ENCODE measurements at regions of chr17 and their contacts with region 1.

Region 1: GRCh38 chr17:45135192-45135977 is at the start of gene ACBD4:
- DNase-seq: peak; percentile 97
- ATAC-seq: peak; percentile 84
- H3K4me3 Mint-ChIP-seq: peak within 1 kb of the TSS; percentile 90
- H3K27ac Mint-ChIP-seq: peak within 1 kb of the TSS; percentile 84
- H3K4me1 Mint-ChIP-seq: peaks cover 16% of the 10 kb centered on the region
- H3K27me3 Mint-ChIP-seq: peaks cover 4% of the 10 kb centered on the region
- CTCF ChIP-seq: peak; percentile 99
- total RNA-seq, gene ACBD4: 20.1 and 20.6 TPM in 2 replicates

Region 2: DNA sequence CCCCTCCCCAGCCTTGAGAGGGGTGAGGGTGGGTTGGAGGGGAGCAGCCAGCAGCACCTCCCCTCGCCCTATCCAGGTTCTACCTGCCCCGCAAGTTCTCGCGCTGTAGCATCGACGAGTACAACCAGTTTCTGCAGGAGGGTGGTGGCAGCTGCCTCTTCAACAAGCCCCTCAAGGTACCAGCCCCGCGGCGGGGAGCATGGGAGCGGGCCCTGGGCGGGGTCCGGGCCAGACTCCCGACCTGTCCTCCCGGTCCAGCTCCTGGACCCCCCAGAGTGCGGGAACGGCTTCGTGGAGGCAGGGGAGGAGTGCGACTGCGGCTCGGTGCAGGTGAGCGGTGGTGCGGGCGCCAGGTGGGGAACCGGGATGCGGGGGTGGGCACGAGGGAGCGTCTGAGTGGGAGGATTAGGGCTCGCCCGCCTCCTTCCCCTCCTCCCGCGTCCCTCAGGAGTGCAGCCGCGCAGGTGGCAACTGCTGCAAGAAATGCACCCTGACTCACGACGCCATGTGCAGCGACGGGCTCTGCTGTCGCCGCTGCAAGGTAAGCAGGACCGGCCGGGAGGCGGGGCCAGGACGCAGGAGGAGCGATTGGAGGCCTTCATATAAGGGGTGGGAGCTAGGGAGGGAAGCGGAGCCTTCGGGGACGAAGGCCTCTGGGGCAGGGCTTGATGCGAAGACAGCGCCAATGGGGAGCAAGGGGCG is 360.1 kb before region 1 on chr17:
- CTCF ChIA-PET with region 1: interaction called, 3 read pairs
- POLR2A ChIA-PET with region 1: no interaction called
- intact Hi-C with region 1: loop called (anchors 1 kb)
- DNase-seq: peak; percentile 90
- ATAC-seq: peak; percentile 96
- H3K4me3 Mint-ChIP-seq: peak overlapping the region; percentile 87
- H3K27ac Mint-ChIP-seq: no peak overlapping the region
- H3K4me1 Mint-ChIP-seq: peaks cover 18% of the 10 kb centered on the region
- H3K27me3 Mint-ChIP-seq: no peaks in the 10 kb centered on the region
- CTCF ChIP-seq: no peak

Region 3: DNA sequence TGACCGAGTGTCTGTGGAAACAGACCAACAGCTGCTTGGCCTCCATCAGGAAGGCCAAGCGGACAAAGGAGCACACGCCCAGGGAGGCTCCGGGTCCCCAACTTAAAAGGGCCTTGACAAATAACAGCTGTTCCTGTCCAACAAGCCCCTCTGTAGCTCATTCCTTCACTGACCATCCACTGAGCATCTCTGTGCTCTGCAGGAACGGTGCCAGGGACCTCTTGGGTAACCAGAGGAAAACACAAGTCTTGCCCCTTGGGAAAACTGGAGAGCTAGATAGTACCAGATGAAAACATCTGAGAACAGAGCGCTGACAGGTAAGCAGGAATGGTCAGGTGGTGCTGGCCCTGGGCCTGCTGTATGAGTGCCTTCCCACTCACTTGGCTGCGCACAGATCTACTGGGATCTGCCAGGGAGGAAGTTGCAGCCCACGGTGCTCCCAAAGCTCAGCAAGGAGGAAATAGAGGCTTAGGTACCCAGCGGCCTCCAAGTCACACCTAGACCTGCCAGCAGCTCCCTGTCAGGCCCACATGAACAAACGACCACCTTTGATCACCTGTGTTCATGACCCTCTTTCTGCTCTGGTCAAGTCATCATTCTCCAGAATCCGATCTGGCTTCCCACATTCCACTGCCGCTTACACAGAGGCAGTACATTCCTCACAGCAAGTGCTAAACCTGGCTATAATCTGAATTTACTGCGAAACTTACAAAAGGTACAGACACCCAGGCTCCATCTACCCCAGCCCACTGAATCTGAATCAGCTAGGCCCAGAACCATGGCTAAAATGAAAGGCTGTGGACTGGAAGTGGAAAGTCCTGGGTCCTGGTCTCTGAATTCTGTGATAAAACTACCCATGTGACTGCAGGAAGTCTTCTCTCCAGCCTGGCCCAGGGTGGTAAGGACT is 96.4 kb before region 1 on chr17:
- CTCF ChIA-PET with region 1: no interaction called
- POLR2A ChIA-PET with region 1: no interaction called
- intact Hi-C with region 1: no loop called
- DNase-seq: no peak
- ATAC-seq: no peak
- H3K4me3 Mint-ChIP-seq: peak overlapping the region; percentile 11
- H3K27ac Mint-ChIP-seq: peak overlapping the region; percentile 50
- H3K4me1 Mint-ChIP-seq: peaks cover 24% of the 10 kb centered on the region
- H3K27me3 Mint-ChIP-seq: no peaks in the 10 kb centered on the region
- CTCF ChIP-seq: no peak

Region 4: DNA sequence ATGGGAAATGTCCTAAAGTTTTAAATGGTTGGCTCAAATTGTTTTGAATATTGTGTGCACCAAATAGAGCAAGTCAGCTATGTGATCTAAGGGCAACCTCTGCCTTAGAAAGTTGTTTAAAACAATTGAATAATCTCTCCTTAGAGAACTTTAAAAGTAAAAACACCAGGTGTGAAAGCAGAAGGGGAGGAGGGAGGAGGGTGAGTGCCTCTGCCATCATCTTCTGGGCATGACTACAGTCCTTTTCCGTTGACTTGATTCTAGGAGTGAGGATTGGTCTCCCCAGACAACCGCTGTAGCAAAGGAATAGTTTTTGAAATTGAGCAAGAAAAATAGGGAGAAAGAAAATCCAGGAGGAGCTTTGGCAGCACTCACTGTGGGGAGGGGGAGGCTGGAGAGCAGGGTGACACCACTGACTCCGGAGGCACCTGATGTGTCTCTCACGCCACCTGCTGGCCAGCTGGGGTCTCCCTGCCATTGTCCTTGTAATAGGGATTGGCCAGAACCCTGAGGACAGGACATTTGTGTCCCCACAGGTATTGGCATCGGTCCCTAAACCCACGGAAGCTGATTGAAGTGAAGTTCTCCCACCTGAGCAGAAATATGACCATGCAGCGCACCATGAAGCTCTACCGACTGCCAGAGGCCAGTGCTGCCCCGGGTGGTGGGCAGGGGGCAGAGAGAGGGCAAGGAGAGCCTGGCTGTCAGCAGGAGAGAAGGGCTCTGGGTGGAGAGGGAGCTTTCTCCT is 36.3 kb before region 1 on chr17:
- CTCF ChIA-PET with region 1: interaction called, 5 read pairs
- POLR2A ChIA-PET with region 1: no interaction called
- intact Hi-C with region 1: loop called (anchors 1 kb)
- DNase-seq: peak; percentile 67
- ATAC-seq: peak; percentile 90
- H3K4me3 Mint-ChIP-seq: no peak overlapping the region
- H3K27ac Mint-ChIP-seq: no peak overlapping the region
- H3K4me1 Mint-ChIP-seq: peaks cover 8% of the 10 kb centered on the region
- H3K27me3 Mint-ChIP-seq: no peaks in the 10 kb centered on the region
- CTCF ChIP-seq: no peak

Region 5: DNA sequence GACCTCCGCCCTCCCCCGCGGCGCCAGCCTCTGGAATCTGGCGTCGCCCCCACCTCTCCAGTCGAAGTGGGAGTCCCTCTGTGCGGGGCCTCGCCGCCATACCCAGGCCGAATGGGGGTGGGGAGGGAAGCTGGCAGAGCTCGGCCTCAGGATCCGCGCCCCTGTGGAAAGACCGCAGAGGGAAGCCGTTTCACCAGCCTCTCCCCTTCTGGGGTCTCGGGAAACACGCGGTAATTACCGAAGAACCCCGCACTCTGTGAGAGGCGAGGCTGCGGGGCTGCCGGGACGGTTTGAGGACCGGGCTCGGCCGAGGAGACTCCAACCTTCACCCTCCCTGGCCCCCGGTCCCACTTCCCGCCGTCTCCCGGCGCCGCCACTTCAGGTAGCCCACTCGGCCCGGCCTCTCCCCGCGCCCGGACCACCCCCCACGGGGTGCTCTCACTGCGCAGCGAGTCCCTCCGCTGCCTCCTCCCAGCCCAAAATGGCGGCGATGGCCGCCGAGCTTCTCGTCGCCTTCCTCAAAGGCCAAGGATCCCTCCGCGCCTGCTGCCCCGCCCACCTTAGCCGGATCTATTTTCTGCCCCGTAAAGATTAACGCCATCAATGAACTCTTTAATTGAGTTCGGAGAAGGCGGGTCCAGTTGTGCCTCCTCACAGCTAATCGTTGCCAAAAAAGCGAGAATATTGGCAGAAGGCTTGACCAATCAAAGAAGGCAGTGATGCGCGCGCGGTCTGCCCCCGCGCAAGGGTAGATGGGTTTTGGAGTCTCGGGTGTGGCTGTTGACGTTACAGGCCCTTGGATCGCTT is 25.8 kb after region 1 on chr17:
- CTCF ChIA-PET with region 1: interaction called, 55 read pairs
- POLR2A ChIA-PET with region 1: interaction called, 35 read pairs
- intact Hi-C with region 1: loop called (anchors 1 kb)
- DNase-seq: peak; percentile 98
- ATAC-seq: peak; percentile 93
- H3K4me3 Mint-ChIP-seq: peak overlapping the region; percentile 99
- H3K27ac Mint-ChIP-seq: peak overlapping the region; percentile 99
- H3K4me1 Mint-ChIP-seq: peaks cover 42% of the 10 kb centered on the region
- H3K27me3 Mint-ChIP-seq: no peaks in the 10 kb centered on the region
- CTCF ChIP-seq: no peak

Region 6: DNA sequence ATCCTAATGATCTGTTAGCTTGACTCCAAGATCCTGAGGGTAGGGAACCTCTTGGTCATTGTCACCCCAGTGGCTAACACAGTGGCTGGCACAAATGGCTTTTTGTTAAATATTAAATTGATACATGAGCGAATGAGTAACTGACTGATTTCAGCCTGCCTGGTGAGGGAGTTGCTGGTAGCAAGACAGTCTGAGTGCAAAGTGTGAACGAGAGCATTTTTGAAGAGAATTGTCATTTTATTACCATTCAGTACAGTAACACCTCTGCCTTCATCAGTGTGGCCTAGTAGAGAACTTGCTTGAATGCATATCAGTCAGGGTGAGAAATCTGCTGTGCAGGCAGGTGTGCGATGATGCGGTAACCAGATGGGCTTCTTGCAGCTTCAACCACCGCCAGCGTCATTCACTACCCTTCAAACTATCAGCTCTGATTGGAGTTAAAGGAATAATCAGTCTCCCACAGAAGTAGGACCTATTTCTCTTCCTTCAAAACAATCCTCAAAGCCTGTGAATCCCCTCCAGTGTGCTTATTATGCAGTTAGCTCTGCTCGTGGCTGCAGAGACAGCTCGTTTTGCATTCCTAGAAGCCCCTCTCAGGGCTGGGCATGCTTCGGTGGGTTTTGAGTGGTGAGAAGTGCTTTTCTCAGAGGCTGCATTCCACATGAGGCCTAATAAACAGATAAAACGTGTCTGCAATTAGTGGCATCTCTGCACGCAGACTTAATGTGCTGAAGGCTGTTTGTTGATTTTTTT is 55.3 kb after region 1 on chr17:
- CTCF ChIA-PET with region 1: interaction called, 161 read pairs
- POLR2A ChIA-PET with region 1: interaction called, 12 read pairs
- intact Hi-C with region 1: no loop called
- DNase-seq: no peak
- ATAC-seq: no peak
- H3K4me3 Mint-ChIP-seq: no peak overlapping the region
- H3K27ac Mint-ChIP-seq: no peak overlapping the region
- H3K4me1 Mint-ChIP-seq: no peaks in the 10 kb centered on the region
- H3K27me3 Mint-ChIP-seq: no peaks in the 10 kb centered on the region
- CTCF ChIP-seq: no peak

Region 7: GRCh38 chr17:45235416-45236281 is 100.3 kb after region 1 on chr17:
- CTCF ChIA-PET with region 1: interaction called, 10 read pairs
- POLR2A ChIA-PET with region 1: interaction called, 7 read pairs
- intact Hi-C with region 1: loop called (anchors 1 kb)
- DNase-seq: peak; percentile 64
- ATAC-seq: peak; percentile 67
- H3K4me3 Mint-ChIP-seq: no peak overlapping the region
- H3K27ac Mint-ChIP-seq: peak overlapping the region; percentile 15
- H3K4me1 Mint-ChIP-seq: peaks cover 50% of the 10 kb centered on the region
- H3K27me3 Mint-ChIP-seq: no peaks in the 10 kb centered on the region
- CTCF ChIP-seq: peak; percentile 70

Region 8: DNA sequence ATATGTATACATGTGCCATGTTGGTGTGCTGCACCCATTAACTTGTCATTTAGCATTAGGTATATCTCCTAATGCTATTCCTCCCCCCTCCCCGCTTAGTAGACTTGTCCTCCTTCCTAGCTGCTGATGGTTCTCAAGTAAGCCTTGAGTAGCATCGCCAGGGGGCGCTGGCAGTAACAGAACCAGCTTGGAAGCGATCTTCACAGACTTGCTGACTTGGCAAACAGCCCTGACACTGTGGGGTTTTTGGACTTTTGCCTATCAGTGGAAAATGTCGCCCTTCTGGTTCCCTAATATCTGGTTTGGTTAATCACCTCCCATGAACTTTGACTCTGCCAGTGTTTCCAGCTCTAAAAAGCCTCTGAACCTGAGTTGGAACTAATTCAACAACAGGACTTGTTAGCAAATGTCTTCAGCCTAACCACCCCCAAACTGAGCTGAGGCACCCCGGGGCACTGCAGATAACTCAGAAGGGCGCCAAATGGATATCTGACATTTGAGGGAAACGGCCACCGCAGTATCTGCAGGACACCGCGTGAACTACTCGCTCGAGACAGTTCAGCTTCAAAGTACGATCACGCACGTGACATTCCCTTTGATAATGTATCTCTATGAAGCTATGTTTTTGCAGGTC is 141.9 kb after region 1 on chr17:
- CTCF ChIA-PET with region 1: no interaction called
- POLR2A ChIA-PET with region 1: no interaction called
- intact Hi-C with region 1: no loop called
- DNase-seq: peak; percentile 76
- ATAC-seq: peak; percentile 98
- H3K4me3 Mint-ChIP-seq: no peak overlapping the region
- H3K27ac Mint-ChIP-seq: peak overlapping the region; percentile 21
- H3K4me1 Mint-ChIP-seq: peaks cover 5% of the 10 kb centered on the region
- H3K27me3 Mint-ChIP-seq: no peaks in the 10 kb centered on the region
- CTCF ChIP-seq: no peak

Measured in activated B cell treated with CpG ODN at 0.5 μM for 24 hours (primary cell).